ENCODE measurements at regions of chr12 and their contacts with region 1.

Region 1: DNA sequence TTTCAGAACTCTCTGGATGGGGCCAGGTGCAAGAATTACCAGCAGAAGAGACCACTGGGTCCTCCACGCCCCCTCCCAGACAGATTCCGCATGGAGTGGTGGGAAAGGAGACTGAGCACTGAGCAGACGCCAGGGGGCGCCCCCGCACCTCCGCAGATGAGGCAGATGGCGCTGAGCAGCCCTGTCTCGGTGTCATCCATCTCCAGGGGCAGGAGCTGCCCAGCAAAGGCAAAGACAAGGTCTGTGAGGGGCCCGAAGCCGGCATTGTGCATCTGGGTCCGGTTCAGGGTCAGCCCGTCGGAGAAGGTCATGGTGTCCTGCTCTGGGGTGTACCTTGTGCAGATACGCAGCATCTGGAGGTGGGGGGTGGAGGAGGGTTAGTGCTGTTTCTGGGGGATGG is 6.3 kb upstream of the ITGB7 start:
- DNase-seq: no peak
- H3K4me3 ChIP-seq: no peak overlapping the region
- CTCF ChIP-seq: peak; percentile 98

Region 2: DNA sequence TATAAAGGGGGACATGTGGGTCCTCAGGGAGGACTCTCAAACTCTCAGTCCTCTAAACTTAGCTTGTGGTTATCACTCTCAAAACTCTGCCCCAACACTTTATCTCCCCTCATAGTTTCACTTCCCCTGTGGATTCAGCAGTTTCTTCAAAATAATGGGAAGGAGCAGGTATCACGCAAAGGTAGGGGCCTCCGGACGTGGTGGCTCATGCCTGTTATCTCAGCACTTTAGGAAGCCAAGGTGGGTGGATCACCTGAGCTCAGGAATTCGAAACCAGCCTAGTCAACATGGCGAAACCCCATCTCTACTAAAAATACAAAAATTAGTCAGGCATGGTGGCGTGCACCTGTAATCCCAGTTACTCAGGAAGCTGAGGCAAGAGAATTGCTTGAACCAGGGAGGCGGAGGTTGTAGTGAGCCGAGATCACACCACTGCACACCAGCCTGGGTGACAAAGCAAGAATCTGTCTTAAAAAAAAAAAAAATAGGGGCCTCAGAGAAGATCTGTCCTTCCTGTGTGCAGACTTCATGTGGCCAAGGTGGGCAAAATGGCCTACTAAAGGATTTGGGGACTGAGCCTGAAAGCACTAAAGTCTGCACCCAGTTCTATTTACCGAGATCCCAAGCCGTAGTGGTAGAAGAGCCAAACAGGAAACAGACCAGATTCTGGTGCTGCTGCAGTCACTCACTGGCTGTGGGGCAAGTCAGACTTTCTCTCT is 12.7 kb before region 1 on chr12:
- CTCF ChIA-PET with region 1: interaction called, 80 read pairs
- POLR2A ChIA-PET with region 1: no interaction called
- DNase-seq: no peak
- H3K4me3 ChIP-seq: no peak overlapping the region
- CTCF ChIP-seq: no peak

Region 3: GRCh38 chr12:53232646-53233461 is 19.5 kb after region 1 on chr12:
- CTCF ChIA-PET with region 1: interaction called, 26 read pairs
- POLR2A ChIA-PET with region 1: no interaction called
- DNase-seq: no peak
- H3K4me3 ChIP-seq: peak overlapping the region; percentile 77
- CTCF ChIP-seq: no peak

Region 4: GRCh38 chr12:53251477-53252348 is 38.4 kb after region 1 on chr12:
- CTCF ChIA-PET with region 1: interaction called, 74 read pairs
- POLR2A ChIA-PET with region 1: no interaction called
- DNase-seq: no peak
- H3K4me3 ChIP-seq: peak overlapping the region; percentile 88
- CTCF ChIP-seq: peak; percentile 46

Region 5: DNA sequence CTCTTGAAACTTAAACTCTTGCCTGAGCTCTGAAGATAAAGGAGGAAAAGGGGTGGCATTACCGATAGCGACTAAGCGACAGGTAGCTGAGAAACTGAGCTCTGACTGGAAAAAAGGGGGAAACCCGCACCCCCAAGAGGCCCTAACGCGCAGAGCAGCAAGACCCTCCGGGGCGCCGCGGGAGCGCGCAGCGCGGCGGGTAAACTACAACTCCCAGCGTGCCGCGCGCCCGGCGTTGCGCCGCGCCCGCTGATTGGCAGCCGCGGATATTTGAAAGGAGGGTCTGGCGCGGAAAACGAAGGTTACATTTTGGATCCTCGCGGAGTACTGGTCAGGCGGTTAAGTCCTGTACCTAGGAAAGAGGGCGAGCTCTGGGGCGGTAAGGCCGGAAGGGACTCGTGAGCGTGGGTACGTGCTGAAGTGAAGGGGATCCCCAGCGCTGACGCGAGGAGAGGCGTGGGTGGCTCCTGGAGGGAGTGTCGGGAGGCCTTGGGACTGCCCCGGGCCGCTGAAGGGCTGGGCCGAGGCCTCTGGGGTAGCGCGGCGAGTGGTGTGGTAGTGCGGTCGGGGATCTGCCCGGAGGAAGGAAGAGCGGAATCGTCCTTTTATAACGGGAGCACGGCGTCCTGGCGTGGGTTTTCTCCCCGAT is 54.8 kb after region 1 on chr12 and contains the start of gene ESPL1:
- CTCF ChIA-PET with region 1: interaction called, 95 read pairs
- POLR2A ChIA-PET with region 1: no interaction called
- DNase-seq: no peak
- H3K4me3 ChIP-seq: peak within 1 kb of the TSS; percentile 95
- CTCF ChIP-seq: peak; percentile 17

Region 6: GRCh38 chr12:53344824-53345485 is 131.6 kb after region 1 on chr12:
- CTCF ChIA-PET with region 1: interaction called, 19 read pairs
- POLR2A ChIA-PET with region 1: no interaction called
- DNase-seq: no peak
- H3K4me3 ChIP-seq: peak overlapping the region; percentile 70
- CTCF ChIP-seq: peak; percentile 89

Measured in AG04449 (cell line).